ENCODE measurements at regions of chr2 and their contacts with region 1.

Region 1: DNA sequence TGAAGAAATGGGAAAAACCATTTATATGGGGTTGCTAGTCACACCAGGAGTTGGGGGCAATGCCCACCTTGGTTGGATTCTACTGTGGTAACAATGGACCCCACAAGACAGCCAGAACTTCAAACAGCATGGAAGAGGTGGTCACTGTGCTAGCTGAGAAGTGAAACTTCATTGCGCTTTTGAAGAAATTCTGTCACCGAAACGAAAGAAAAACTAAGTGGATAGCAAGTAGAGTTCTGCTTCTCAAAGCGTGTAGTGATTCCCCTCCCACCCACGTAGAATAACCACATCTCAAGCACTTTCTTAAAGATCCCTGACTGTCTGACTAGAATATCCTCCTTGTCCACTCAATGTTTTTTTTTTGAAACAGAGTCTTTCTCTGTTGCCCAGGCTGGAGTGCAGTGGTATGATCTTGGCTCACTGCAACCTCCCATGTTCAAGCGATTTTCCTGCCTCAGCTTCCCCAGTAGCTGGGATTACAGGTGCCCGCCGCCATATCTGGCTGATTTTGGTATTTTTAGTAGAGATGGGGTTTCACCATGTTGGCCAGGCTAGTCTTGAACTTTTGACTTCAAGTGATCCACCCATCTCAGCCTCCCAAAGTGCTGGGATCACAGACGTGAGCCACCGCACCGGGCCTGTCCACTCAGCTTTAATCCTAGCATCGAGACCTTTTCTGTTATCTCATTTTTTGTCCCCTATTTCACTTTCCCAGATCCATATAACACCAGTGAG is 30.1 kb upstream of the CCL20 start:
- DNase-seq: peak; percentile 81
- ATAC-seq: peak; percentile 91
- H3K4me3 ChIP-seq: peak overlapping the region; percentile 57
- H3K27ac ChIP-seq: peak overlapping the region; percentile 75
- H3K4me1 ChIP-seq: peaks cover 20% of the 10 kb centered on the region
- H3K27me3 ChIP-seq: no peaks in the 10 kb centered on the region
- CTCF ChIP-seq: no peak
- EP300 ChIP-seq: peak in 1 of 2 experiments; percentile 71; a peak in 1 of 4 replicates
- POLR2A ChIP-seq: 0 out of 2 replicates have a peak, but pooled peaks have one; percentile 39
- RAD21 ChIP-seq: no peak

Region 2: DNA sequence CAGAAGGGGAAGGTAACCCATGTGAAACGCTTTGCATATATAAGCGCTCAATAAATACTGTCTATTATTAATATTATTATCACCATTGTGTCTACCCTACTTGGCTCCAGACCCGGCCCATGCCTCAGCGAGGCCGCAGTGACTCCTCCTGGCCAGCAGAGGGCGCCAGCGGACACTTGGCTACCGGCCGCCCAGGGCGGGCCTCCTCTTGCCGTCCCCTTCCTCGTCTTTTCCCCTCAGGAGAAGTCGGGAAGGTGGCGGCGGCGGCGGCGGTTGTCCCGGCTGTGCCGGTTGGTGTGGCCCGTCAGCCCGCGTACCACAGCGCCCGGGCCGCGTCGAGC is 311.7 kb before region 1 on chr2 and contains the start of gene AGFG1:
- CTCF ChIA-PET with region 1: no interaction called
- POLR2A ChIA-PET with region 1: no interaction called
- RAD21 ChIA-PET with region 1: interaction called, 4 read pairs
- SMC1A ChIA-PET with region 1: interaction called, 21 read pairs
- in situ Hi-C with region 1: no loop called
- intact Hi-C with region 1: no loop called
- DNase-seq: no peak
- ATAC-seq: peak; percentile 81
- H3K4me3 ChIP-seq: peak within 1 kb of the TSS; percentile 83
- H3K27ac ChIP-seq: peak within 1 kb of the TSS; percentile 68
- H3K4me1 ChIP-seq: no peaks in the 10 kb centered on the region
- H3K27me3 ChIP-seq: no peaks in the 10 kb centered on the region
- CTCF ChIP-seq: peak; percentile 95 to 99 (median 98); a peak in 5 of 6 replicates
- EP300 ChIP-seq: no peak
- POLR2A ChIP-seq: peak; percentile 58
- RAD21 ChIP-seq: peak; percentile 71
- polyA plus RNA-seq, gene AGFG1: 28.6 to 53.2 TPM

Region 3: GRCh38 chr2:227724394-227725045 is 59.1 kb before region 1 on chr2 and contains the start of gene SCYGR6:
- CTCF ChIA-PET with region 1: no interaction called
- POLR2A ChIA-PET with region 1: no interaction called
- RAD21 ChIA-PET with region 1: no interaction called
- SMC1A ChIA-PET with region 1: no interaction called
- in situ Hi-C with region 1: no loop called
- intact Hi-C with region 1: no loop called
- DNase-seq: no peak
- ATAC-seq: no peak
- H3K4me3 ChIP-seq: no peak within 1 kb of the TSS
- H3K27ac ChIP-seq: no peak within 1 kb of the TSS
- H3K4me1 ChIP-seq: no peaks in the 10 kb centered on the region
- H3K27me3 ChIP-seq: no peaks in the 10 kb centered on the region
- CTCF ChIP-seq: no peak
- EP300 ChIP-seq: no peak
- POLR2A ChIP-seq: no peak
- RAD21 ChIP-seq: no peak
- polyA plus RNA-seq, gene SCYGR6: not detected

Region 4: GRCh38 chr2:227796045-227796711 is 12.6 kb after region 1 on chr2:
- CTCF ChIA-PET with region 1: interaction called, 11 read pairs
- POLR2A ChIA-PET with region 1: interaction called, 4 read pairs
- RAD21 ChIA-PET with region 1: interaction called, 13 read pairs
- SMC1A ChIA-PET with region 1: interaction called, 63 read pairs
- in situ Hi-C with region 1: no loop called
- intact Hi-C with region 1: loop called (anchors 1 kb)
- DNase-seq: no peak
- ATAC-seq: no peak
- H3K4me3 ChIP-seq: no peak overlapping the region
- H3K27ac ChIP-seq: no peak overlapping the region
- H3K4me1 ChIP-seq: no peaks in the 10 kb centered on the region
- H3K27me3 ChIP-seq: no peaks in the 10 kb centered on the region
- CTCF ChIP-seq: no peak
- EP300 ChIP-seq: no peak
- POLR2A ChIP-seq: no peak
- RAD21 ChIP-seq: no peak

Region 5: DNA sequence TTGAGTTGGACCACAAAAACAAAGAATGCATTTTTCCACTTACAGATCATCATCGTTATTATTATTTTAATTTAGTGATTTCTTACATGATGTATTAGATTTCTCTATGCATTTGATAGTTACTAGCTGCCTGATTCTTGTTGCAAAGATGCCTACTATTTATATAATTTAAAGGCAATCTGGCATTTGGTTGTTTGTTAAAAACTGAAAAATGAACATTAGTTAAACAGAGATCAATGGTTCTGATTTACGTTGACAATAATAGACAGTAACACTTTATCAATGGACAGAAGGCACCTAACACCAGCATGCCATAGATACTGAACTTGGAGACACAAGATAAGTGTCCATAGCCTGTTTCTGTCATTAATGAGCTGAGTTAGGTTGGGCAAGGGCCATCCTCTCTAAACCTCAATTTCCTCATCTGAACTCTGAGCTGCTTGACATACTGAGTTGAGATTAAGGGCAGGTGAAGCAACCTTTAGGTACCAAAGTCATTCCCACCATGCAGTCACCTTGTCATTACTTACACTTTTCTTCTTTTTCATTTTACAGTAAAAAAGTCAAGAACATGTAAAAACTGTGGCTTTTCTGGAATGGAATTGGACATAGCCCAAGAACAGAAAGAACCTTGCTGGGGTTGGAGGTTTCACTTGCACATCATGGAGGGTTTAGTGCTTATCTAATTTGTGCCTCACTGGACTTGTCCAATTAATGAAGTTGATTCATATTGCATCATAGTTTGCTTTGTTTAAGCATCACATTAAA is 33.1 kb after region 1 on chr2:
- CTCF ChIA-PET with region 1: interaction called, 4 read pairs
- POLR2A ChIA-PET with region 1: interaction called, 3 read pairs
- RAD21 ChIA-PET with region 1: interaction called, 6 read pairs
- SMC1A ChIA-PET with region 1: interaction called, 120 read pairs
- in situ Hi-C with region 1: no loop called
- intact Hi-C with region 1: no loop called
- DNase-seq: no peak
- ATAC-seq: peak; percentile 23; the same call in 2 of the 3 replicates
- H3K4me3 ChIP-seq: no peak overlapping the region
- H3K27ac ChIP-seq: no peak overlapping the region
- H3K4me1 ChIP-seq: no peaks in the 10 kb centered on the region
- H3K27me3 ChIP-seq: no peaks in the 10 kb centered on the region
- CTCF ChIP-seq: no peak
- EP300 ChIP-seq: no peak
- POLR2A ChIP-seq: no peak
- RAD21 ChIP-seq: no peak

Region 6: DNA sequence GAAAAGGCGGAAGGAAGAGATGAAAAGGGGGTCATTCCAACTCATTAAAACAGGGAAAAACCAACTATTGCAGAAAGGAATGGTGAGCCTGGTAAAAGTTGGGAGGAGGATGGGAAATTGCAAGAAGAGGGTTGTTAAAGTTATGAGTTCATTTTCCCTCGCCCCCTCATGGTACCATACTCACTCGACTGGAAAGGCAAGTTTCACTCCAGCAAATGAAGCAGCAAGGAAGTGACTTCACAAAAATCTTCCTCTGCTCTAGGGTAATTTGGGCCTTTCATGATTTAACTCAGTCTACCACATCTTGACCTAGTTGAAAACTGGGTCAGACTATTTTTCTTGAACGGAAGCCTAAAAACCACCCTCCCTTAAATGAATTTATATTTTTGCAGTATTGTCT is 65.0 kb after region 1 on chr2:
- CTCF ChIA-PET with region 1: interaction called, 5 read pairs
- POLR2A ChIA-PET with region 1: interaction called, 7 read pairs
- RAD21 ChIA-PET with region 1: interaction called, 11 read pairs
- SMC1A ChIA-PET with region 1: interaction called, 62 read pairs
- in situ Hi-C with region 1: no loop called
- intact Hi-C with region 1: loop called (anchors 2 kb)
- DNase-seq: peak; percentile 80
- ATAC-seq: peak; percentile 95
- H3K4me3 ChIP-seq: peak overlapping the region; percentile 20; the same call in 1 of the 2 replicates
- H3K27ac ChIP-seq: peak overlapping the region; percentile 38
- H3K4me1 ChIP-seq: peaks cover 8% of the 10 kb centered on the region; the same call in 1 of the 2 replicates
- H3K27me3 ChIP-seq: no peaks in the 10 kb centered on the region
- CTCF ChIP-seq: no peak
- EP300 ChIP-seq: 0 out of 4 replicates have a peak, but pooled peaks of 1 of the 2 experiments have one; percentile 50
- POLR2A ChIP-seq: no peak
- RAD21 ChIP-seq: no peak

Region 7: GRCh38 chr2:227884511-227884947 is 101.0 kb after region 1 on chr2:
- CTCF ChIA-PET with region 1: no interaction called
- POLR2A ChIA-PET with region 1: no interaction called
- RAD21 ChIA-PET with region 1: no interaction called
- SMC1A ChIA-PET with region 1: no interaction called
- in situ Hi-C with region 1: no loop called
- intact Hi-C with region 1: no loop called
- DNase-seq: no peak
- ATAC-seq: peak; percentile 99
- H3K4me3 ChIP-seq: no peak overlapping the region
- H3K27ac ChIP-seq: no peak overlapping the region
- H3K4me1 ChIP-seq: no peaks in the 10 kb centered on the region
- H3K27me3 ChIP-seq: 0 out of 4 replicates have a peak, but pooled peaks cover 0 to 2% of the 10 kb centered on the region in 2 experiments
- CTCF ChIP-seq: peak; percentile 85 to 96 (median 96)
- EP300 ChIP-seq: no peak
- POLR2A ChIP-seq: no peak
- RAD21 ChIP-seq: peak; percentile 67